IMR-90 (cell line): ENCODE measurements at regions of chr15 and their contacts with region 1.

Region 1: DNA sequence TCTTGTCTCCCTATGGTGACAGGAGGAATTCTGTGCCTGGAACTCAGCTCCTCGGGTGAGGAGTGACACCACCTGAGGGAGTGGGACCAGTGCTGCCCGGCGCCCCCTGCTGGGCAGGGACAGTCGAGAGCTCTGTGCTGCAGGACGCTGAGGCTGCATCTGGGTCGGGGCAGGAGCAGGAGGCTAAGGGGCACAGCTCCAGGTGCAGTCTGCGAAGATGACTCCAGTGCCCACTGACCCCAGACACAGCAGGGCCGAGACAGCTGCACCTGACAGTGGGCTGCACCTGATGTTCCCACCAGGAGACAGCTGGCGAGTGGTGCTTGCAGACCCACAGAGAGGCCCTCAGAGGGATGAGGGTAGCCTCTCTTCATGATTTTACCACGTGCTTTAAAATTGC is 152.9 kb downstream of the ATP10A start:
- DNase-seq: no peak
- ATAC-seq: peak; percentile 65
- H3K4me3 ChIP-seq: no peak overlapping the region
- H3K27ac ChIP-seq: no peak overlapping the region
- H3K4me1 ChIP-seq: peaks cover 2% of the 10 kb centered on the region; the same call in 1 of the 2 replicates
- H3K27me3 ChIP-seq: no peaks in the 10 kb centered on the region
- CTCF ChIP-seq: peak; percentile 43; the same call in 1 of the 2 replicates
- POLR2A ChIP-seq: no peak
- RAD21 ChIP-seq: peak; percentile 35; the same call in 1 of the 2 replicates

Region 2: DNA sequence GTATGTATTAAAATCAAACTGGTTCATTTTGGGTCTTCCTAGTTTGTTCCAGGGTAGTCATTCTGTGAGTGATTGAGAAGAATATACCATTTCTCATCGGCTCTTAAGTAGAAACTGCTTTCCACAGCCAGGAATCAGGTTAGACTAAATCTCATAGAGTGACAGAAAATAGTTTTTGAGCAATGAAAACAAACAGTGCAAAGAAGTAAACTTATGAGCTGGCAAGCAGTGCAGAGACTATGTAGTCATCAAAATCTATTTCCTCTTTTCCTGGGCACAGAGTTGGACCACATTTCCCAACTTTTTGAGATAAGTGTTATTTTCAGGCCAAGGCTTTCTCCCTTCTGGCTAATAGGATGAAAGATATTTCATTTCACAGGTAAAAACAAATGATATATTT is 337.9 kb before region 1 on chr15:
- CTCF ChIA-PET with region 1: no interaction called
- POLR2A ChIA-PET with region 1: no interaction called
- dilution Hi-C with region 1: no loop called
- in situ Hi-C with region 1: no loop called
- intact Hi-C with region 1: no loop called
- DNase-seq: peak; percentile 76
- ATAC-seq: peak; percentile 87
- H3K4me3 ChIP-seq: no peak overlapping the region
- H3K27ac ChIP-seq: no peak overlapping the region
- H3K4me1 ChIP-seq: peaks cover 2% of the 10 kb centered on the region
- H3K27me3 ChIP-seq: no peaks in the 10 kb centered on the region
- CTCF ChIP-seq: no peak
- POLR2A ChIP-seq: no peak
- RAD21 ChIP-seq: no peak

Region 3: DNA sequence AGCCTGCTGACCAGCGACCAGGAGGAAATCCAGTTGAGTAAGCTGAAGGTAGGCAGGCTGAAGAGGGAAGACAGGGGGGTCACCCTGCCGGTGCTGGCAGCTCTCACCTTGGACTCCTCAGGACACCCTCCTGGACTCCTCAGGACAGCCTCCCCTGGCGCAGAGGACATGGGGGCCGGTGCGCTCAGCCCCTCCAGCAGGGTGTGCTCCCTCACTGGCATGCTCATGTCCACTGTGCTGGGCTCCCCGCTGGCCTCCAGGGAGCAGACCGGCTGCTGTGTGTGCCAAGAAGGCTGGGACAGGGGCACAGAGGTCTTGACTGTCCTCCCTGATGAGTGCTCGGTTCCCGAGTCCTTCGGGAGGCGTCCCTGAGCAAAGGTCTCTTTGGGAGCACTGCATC is 30.7 kb before region 1 on chr15:
- CTCF ChIA-PET with region 1: no interaction called
- POLR2A ChIA-PET with region 1: no interaction called
- dilution Hi-C with region 1: no loop called
- in situ Hi-C with region 1: no loop called
- intact Hi-C with region 1: loop called (anchors 1 kb)
- DNase-seq: no peak
- ATAC-seq: no peak
- H3K4me3 ChIP-seq: no peak overlapping the region
- H3K27ac ChIP-seq: no peak overlapping the region
- H3K4me1 ChIP-seq: peaks cover 1% of the 10 kb centered on the region; the same call in 1 of the 2 replicates
- H3K27me3 ChIP-seq: no peaks in the 10 kb centered on the region
- CTCF ChIP-seq: no peak
- POLR2A ChIP-seq: no peak
- RAD21 ChIP-seq: no peak